ENCODE measurements at regions of chr4 and their contacts with region 1.

Region 1: DNA sequence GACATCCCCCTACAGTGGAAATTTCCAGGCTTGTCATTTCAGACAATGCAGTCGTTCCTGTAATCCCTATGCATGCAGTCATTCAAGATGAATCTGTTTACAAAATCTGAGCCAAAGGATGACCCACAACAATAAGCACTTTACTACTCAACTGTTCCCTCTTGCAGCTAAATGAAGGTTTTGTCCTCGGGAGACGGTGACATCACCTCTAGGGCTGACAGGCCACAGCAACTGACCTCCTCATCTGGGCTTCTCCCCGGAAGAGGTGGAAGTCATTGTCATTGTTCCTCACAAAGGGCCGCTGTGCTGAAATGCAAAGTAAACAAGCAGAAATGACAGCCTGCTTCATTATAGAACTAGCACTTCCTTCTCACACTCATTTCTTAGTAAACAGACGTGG is 29.2 kb downstream of the CLRN2 start:
- DNase-seq: no peak
- ATAC-seq: no peak

Region 2: GRCh38 chr4:17636696-17637622 is 92.8 kb after region 1 on chr4:
- intact Hi-C with region 1: loop called (anchors 5 kb)
- DNase-seq: peak; percentile 86
- ATAC-seq: peak; percentile 90

Region 3: DNA sequence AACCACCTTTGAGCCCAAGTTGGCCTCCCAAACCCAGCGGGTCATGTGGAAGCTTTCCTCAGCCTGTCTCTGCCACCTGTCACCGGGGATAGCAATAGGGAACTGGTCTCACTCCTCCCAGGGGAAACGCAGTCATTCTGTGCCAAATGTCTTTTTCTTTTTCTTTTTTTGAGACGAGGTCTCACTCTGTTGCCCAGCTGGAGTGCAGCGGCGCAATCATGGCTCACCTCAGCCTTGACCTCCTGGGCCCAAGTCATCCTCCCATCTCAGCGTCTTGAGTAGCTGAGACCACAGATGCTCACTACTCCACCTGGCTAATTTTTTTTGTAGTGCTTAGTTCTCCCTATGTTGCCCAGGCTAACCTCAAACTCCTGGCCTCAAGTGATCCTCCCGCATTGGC is 110.5 kb after region 1 on chr4:
- intact Hi-C with region 1: no loop called
- DNase-seq: no peak
- ATAC-seq: no peak

Measured in left ventricle myocardium superior (tissue), 1 donor.